HepG2 (cell line): ENCODE measurements at regions of chr17 and their contacts with region 1.

Region 1: DNA sequence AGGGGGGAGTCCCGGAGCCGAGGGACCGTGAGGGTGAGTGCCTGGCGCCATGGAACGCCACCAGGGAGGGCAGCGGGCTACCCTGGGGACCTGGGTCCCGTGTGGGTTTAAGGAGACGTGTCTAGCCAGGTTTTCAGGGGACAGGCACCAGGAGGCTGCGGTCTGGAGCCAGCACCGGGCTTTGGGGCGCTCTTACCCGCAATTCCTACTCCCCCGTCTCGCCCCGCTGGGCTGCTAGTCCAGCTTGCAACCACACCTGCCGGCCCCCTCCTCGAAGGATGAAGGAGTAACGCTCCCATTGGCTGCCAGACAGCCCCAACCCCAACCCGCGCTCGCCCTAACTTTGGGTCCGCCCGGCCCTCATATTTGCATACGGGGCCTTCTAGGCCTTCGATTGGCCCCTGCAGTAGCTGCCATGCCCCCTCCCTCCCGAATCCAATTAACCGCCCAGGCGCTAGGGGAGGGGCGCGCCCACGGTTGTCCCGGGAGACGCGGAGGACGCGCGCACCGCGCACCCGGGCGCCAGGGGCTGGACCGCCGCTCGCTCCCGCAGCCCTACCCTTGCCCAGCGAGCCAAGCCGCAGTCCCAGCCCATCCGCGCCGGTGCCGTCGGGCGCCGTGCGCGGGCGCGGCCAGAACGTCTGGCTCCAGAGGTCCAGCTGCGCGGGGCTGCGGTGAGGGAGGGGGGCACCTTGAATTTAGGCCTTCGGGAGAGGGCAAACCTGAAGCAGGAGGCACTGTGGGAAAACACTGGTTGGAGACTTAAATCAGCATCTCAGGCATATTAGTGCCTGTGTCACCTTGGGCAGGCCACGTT is at the start of gene TTLL6:
- DNase-seq: peak; percentile 87
- ATAC-seq: peak; percentile 94
- H3K4me3 ChIP-seq: peak within 1 kb of the TSS; percentile 36 to 71 (median 45); a peak in 5 of 6 replicates
- H3K27ac ChIP-seq: no peak within 1 kb of the TSS
- H3K4me1 ChIP-seq: peaks cover 31% of the 10 kb centered on the region
- H3K27me3 ChIP-seq: peaks cover 0 to 28% of the 10 kb centered on the region in 2 experiments; a peak in 3 of 5 replicates
- CTCF ChIP-seq: 0 out of 2 replicates have a peak, but pooled peaks have one; percentile 6
- EP300 ChIP-seq: no peak
- POLR2A ChIP-seq: no peak
- RAD21 ChIP-seq: no peak
- total RNA-seq, gene TTLL6: 0.04 TPM in 1 of 2 replicates, not detected in the other

Region 2: GRCh38 chr17:48804925-48805411 is 12.0 kb before region 1 on chr17:
- CTCF ChIA-PET with region 1: interaction called, 14 read pairs
- POLR2A ChIA-PET with region 1: interaction called, 5 read pairs
- in situ Hi-C with region 1: no loop called
- intact Hi-C with region 1: no loop called
- DNase-seq: peak; percentile 63
- ATAC-seq: peak; percentile 94
- H3K4me3 ChIP-seq: peak overlapping the region in 2 of 3 experiments; percentile 41 to 61; a peak in 4 of 6 replicates
- H3K27ac ChIP-seq: no peak overlapping the region
- H3K4me1 ChIP-seq: peaks cover 63% of the 10 kb centered on the region
- H3K27me3 ChIP-seq: peaks cover 0 to 6% of the 10 kb centered on the region in 2 experiments; a peak in 4 of 5 replicates
- CTCF ChIP-seq: peak; percentile 95
- EP300 ChIP-seq: no peak
- POLR2A ChIP-seq: no peak
- RAD21 ChIP-seq: peak; percentile 97

Region 3: DNA sequence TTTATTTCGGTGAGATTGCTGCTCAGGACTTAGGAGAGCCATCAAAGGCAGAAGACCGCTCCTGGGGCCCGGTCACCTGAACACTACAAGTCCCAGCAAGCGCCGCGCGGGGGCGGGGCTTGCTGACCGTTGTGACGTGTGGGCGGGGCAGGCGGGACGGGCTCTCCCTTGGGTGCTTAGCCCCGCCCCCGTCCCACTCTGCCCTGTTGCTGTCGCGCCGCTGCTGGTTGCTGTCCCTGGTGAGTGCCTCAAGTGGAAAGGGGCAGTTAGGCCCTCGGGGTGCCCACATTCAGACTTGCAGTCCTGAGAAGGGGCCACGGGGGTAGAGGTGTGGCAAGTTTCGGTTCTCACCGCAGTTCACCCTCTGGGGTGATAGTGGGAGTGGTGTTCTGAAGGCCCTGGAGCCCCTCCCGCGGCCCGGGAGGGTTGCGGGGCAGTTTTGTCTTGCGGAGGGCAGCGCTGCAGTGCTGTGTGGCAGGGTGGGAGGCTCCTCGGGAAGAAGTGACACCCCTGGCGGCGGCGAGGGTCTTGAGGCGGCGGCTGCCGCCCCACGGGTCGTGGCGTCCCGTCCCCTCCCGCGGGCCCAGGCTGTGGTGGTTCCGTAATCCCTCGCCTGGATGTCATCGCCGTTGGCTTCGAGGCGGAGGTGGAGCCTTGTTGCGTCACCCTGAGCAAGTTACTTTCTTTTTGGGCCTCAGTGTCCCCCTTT is 14.0 kb after region 1 on chr17 and contains the start of gene CALCOCO2:
- CTCF ChIA-PET with region 1: no interaction called
- POLR2A ChIA-PET with region 1: no interaction called
- in situ Hi-C with region 1: no loop called
- intact Hi-C with region 1: loop called (anchors 1 kb)
- DNase-seq: peak; percentile 95
- ATAC-seq: peak; percentile 97
- H3K4me3 ChIP-seq: peak within 1 kb of the TSS; percentile 81 to 99 (median 87)
- H3K27ac ChIP-seq: peak within 1 kb of the TSS; percentile 67
- H3K4me1 ChIP-seq: peaks cover 52% of the 10 kb centered on the region
- H3K27me3 ChIP-seq: no peaks in the 10 kb centered on the region; a peak in 1 of 5 replicates
- CTCF ChIP-seq: peak; percentile 38; the same call in 1 of the 2 replicates
- EP300 ChIP-seq: 0 out of 4 replicates have a peak, but pooled peaks of 1 of the 2 experiments have one; percentile 13
- POLR2A ChIP-seq: peak; percentile 70 to 93
- RAD21 ChIP-seq: peak; percentile 35; the same call in 1 of the 2 replicates
- total RNA-seq, gene CALCOCO2: 72.9 and 112 TPM in 2 replicates

Region 4: DNA sequence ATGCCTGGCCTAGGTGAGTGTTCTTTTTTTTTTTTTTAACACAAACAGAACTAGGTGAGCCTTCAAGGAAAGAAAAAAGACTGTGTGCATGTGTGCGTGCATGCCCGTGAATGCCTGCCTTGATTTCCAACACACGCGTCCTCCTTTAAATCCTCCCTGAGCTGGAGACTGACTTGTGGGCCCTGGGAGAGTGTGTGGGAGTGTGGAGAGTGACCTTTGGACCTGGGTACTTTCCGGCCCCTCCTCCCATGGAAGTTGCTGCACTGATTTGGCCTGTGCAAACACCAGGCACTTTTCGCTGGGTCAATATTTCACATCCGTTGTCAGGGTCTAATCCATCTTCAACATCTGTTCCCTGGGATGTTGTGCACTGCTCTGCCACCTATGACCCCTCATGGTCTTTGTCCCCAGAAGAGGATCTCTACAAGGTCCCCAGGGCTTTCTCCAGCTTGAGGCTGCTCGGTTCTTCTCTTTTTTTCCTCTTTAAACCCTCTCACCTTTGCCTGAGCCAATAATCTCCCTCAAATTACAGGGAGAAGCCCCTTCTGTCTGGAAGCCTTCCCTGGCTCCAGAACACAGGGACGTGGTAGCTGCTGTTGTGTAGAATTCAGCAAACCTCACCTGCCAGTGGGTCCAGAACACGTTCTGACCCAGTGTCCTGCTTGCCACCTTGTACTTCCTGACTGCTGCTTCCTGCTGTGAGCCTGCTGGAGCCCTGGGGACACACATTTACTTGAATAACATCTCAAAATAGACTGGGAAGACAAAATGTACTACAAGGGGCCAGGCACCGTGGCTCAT is 54.8 kb after region 1 on chr17:
- CTCF ChIA-PET with region 1: interaction called, 155 read pairs
- POLR2A ChIA-PET with region 1: interaction called, 10 read pairs
- in situ Hi-C with region 1: loop called (anchors 5 kb)
- intact Hi-C with region 1: loop called (anchors 2 kb)
- DNase-seq: peak; percentile 99
- ATAC-seq: peak; percentile 96
- H3K4me3 ChIP-seq: peak overlapping the region; percentile 17 to 60 (median 25); a peak in 4 of 6 replicates
- H3K27ac ChIP-seq: peak overlapping the region; percentile 97
- H3K4me1 ChIP-seq: peaks cover 64% of the 10 kb centered on the region
- H3K27me3 ChIP-seq: no peaks in the 10 kb centered on the region
- CTCF ChIP-seq: peak; percentile 45; the same call in 1 of the 2 replicates
- EP300 ChIP-seq: peak; percentile 98
- POLR2A ChIP-seq: peak; percentile 56 to 74
- RAD21 ChIP-seq: peak; percentile 45; the same call in 1 of the 2 replicates

Region 5: DNA sequence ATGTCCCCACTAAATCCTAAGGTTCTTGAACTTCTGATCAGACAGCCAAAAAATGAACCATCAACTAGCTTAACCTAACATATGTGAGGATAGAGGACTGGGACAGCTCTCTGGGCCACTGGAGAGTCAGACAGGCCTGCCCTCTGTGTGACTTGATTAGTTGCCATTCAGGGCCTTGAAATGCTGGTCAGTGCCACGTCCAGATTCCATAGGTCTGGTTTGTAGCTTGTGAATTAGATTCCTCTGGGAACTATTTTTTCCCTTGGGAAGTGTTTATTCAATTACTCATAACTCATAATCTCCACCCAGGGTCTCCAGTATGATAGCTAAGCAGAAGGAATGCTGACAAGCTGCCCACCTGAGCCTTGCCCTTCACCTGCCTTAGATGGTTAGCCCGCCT is 228.4 kb after region 1 on chr17:
- CTCF ChIA-PET with region 1: no interaction called
- POLR2A ChIA-PET with region 1: no interaction called
- in situ Hi-C with region 1: loop called (anchors 10 kb)
- intact Hi-C with region 1: no loop called
- DNase-seq: no peak
- ATAC-seq: no peak
- H3K4me3 ChIP-seq: no peak overlapping the region
- H3K27ac ChIP-seq: no peak overlapping the region
- H3K4me1 ChIP-seq: no peaks in the 10 kb centered on the region
- H3K27me3 ChIP-seq: no peaks in the 10 kb centered on the region
- CTCF ChIP-seq: no peak
- EP300 ChIP-seq: no peak
- POLR2A ChIP-seq: 0 out of 4 replicates have a peak, but pooled peaks of 1 of the 2 experiments have one; percentile 6
- RAD21 ChIP-seq: no peak